ENCODE measurements at regions of chr3 and their contacts with region 1.

Region 1: DNA sequence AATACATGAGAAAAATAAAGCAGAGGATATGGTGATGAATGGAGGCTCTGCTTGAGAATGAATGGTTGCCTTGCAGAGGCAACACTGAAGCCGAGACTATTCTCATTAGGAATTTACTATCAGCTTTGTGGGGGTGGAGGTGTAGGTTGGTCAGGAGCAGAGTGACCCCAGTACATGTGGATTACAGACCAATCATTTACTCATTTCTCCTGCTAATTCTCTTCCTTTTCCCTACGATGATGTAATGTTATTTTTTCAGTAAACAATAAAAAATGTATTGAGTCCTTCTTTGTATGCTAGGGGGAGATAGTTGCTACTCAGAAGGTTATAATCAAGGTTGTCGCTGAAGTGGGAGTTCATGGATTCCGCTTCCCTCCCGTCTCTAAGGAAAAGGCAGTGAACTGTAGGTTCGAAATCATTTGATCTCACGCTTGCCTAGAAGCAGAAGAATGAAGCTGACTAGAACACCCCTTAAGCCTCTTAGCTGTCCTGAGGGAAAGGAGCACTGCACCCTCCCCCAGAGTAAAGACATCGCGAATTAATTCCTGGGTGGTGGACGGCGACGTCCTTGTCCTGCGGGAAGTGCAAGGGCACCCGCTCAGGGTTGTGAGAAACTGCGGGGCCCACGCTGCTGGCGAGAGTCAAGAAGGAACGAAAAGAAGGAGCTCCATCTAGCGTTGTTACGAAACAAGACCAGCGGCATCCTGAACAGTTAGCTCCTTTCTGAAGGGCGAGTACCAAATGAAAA is 213.2 kb upstream of the PFN2 start:
- DNase-seq: peak; percentile 50
- ATAC-seq: peak; percentile 95
- H3K4me3 ChIP-seq: peak overlapping the region; percentile 35 to 66 (median 37); a peak in 5 of 6 replicates
- H3K27ac ChIP-seq: no peak overlapping the region
- H3K4me1 ChIP-seq: peaks cover 34% of the 10 kb centered on the region
- H3K27me3 ChIP-seq: no peaks in the 10 kb centered on the region; a peak in 1 of 5 replicates
- CTCF ChIP-seq: peak; percentile 89
- EP300 ChIP-seq: no peak
- POLR2A ChIP-seq: no peak
- RAD21 ChIP-seq: peak; percentile 60

Region 2: GRCh38 chr3:149936812-149937233 is 247.0 kb before region 1 on chr3:
- CTCF ChIA-PET with region 1: interaction called, 6 read pairs
- POLR2A ChIA-PET with region 1: no interaction called
- in situ Hi-C with region 1: no loop called
- intact Hi-C with region 1: loop called (anchors 1 kb)
- DNase-seq: peak; percentile 47
- ATAC-seq: peak; percentile 88
- H3K4me3 ChIP-seq: no peak overlapping the region
- H3K27ac ChIP-seq: no peak overlapping the region
- H3K4me1 ChIP-seq: no peaks in the 10 kb centered on the region
- H3K27me3 ChIP-seq: no peaks in the 10 kb centered on the region
- CTCF ChIP-seq: peak; percentile 88
- EP300 ChIP-seq: no peak
- POLR2A ChIP-seq: no peak
- RAD21 ChIP-seq: peak; percentile 67

Region 3: DNA sequence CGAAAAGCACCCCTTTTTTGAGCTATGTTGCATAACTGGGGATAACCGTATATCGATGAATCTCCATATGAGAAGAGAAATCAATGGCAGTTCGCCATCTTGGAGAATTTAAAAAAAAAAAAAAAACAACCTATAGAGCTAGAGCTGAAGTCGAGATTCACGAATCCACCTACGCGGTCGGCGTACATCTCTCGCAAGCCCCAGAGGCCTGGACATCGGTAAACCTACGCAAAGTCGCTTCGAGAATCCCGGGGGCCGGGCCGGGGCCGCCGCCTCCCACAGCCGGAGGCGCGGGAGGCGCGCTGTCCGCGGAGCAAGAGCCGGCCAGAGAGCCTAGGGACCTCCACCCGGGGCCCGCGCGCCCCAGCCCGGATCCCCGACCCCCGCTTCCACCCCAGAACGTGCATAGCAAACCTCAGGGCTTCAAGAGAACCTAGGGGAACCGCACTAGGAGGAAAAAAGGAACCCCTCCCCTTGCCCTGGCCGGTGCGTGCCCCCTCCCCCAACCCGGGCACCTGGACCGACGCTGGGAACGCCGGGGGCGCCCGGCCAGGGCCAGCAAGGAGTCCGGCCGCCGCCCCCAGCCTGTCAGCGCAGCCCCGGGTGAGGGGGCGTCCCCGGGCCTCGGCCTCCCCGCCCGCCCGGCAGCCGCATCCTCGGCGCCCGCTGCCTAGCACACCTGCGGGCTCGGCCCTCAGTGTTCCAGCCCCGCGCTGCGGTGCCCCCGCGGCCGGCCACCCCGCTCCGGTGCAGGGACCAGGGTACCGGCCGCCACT is 213.7 kb before region 1 on chr3:
- CTCF ChIA-PET with region 1: interaction called, 13 read pairs
- POLR2A ChIA-PET with region 1: no interaction called
- in situ Hi-C with region 1: loop called (anchors 10 kb)
- intact Hi-C with region 1: loop called (anchors 1 kb)
- DNase-seq: peak; percentile 78
- ATAC-seq: peak; percentile 67
- H3K4me3 ChIP-seq: peak overlapping the region; percentile 82 to 93 (median 92)
- H3K27ac ChIP-seq: peak overlapping the region; percentile 93
- H3K4me1 ChIP-seq: peaks cover 46% of the 10 kb centered on the region
- H3K27me3 ChIP-seq: no peaks in the 10 kb centered on the region; a peak in 1 of 5 replicates
- CTCF ChIP-seq: no peak
- EP300 ChIP-seq: no peak
- POLR2A ChIP-seq: peak in 1 of 2 experiments; percentile 59; a peak in 2 of 4 replicates
- RAD21 ChIP-seq: no peak